Breast epithelium (tissue), 4 donors: ENCODE measurements at regions of chrX and their contacts with region 1.

Region 1: DNA sequence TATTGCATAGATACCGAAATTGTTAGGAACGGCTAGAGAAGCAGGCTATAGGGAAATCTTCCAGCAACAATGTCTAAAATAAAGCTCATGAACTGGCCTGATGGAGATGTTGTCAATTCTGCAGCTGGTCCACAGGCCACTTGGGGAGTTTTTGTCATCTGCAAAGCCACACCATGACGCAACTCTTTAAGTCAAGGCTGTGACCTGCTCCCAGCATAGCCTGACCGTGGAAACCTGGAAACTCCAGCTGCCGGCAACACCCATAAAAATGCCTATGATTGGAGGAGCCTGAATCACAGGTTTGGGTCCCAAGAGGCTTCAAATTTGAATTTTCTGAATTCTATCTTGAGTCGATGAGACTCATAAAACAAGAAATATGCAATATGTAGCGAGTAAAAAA is 969.2 kb upstream of the PRKX start:
- DNase-seq: no peak
- H3K4me3 ChIP-seq: no peak overlapping the region
- H3K27ac ChIP-seq: no peak overlapping the region
- H3K4me1 ChIP-seq: no peaks in the 10 kb centered on the region
- H3K27me3 ChIP-seq: no peaks in the 10 kb centered on the region
- CTCF ChIP-seq: no peak
- POLR2A ChIP-seq: no peak

Region 2: DNA sequence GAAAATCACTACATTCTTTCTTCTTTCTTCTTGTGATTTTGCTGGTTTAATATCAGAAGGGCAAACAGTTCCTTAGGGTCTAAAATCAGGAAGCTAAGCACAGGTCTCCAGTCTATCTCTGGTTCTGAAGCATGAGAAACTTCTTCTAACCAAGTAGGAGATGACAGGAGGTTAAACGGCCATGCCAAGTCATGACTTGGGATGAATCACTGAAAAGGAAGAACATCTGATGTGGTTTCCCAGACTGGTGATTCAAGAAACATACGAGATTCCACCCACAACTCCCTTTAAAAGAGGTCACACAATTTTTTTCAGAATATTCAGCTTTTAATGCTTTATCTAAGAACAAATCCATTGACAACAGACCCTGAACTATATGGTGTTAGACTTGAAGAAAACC is 285.1 kb before region 1 on chrX:
- intact Hi-C with region 1: loop called (anchors 5 kb)
- DNase-seq: no peak
- H3K4me3 ChIP-seq: no peak overlapping the region
- H3K27ac ChIP-seq: no peak overlapping the region
- H3K4me1 ChIP-seq: no peaks in the 10 kb centered on the region
- H3K27me3 ChIP-seq: no peaks in the 10 kb centered on the region
- CTCF ChIP-seq: no peak
- POLR2A ChIP-seq: no peak

Region 3: GRCh38 chrX:4627414-4627813 is 55.2 kb before region 1 on chrX:
- intact Hi-C with region 1: no loop called
- DNase-seq: no peak
- H3K4me3 ChIP-seq: no peak overlapping the region
- H3K27ac ChIP-seq: no peak overlapping the region
- H3K4me1 ChIP-seq: no peaks in the 10 kb centered on the region
- H3K27me3 ChIP-seq: no peaks in the 10 kb centered on the region
- CTCF ChIP-seq: no peak
- POLR2A ChIP-seq: no peak